Dorsolateral prefrontal cortex (tissue), 120 donors: ENCODE measurements at regions of chr18 and their contacts with region 1.

Region 1: DNA sequence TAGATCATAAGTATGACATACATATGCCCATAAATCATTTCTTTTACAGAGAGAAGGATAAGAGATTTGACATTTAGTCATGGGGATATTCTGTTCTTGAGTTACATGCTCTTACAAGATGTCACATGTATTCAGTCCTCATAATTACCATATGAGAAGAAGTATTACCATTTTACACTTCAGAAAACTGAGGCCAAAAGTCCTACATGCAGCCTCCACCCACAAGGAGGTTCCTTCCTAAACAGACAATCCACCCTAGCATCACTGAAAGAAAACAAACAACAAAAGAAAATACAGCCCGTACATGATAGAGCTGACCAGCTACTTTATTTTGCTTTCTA is 335.1 kb downstream of the SETBP1 start:
- DNase-seq: no peak
- H3K4me3 ChIP-seq: peak overlapping the region in 53 of 59 donors; percentile 18 to 65 (median 46)
- H3K27ac ChIP-seq: peak overlapping the region in 48 of 59 donors; percentile 11 to 89 (median 80)
- H3K27me3 ChIP-seq: no peaks in the 10 kb centered on the region
- CTCF ChIP-seq: no peak

Region 2: DNA sequence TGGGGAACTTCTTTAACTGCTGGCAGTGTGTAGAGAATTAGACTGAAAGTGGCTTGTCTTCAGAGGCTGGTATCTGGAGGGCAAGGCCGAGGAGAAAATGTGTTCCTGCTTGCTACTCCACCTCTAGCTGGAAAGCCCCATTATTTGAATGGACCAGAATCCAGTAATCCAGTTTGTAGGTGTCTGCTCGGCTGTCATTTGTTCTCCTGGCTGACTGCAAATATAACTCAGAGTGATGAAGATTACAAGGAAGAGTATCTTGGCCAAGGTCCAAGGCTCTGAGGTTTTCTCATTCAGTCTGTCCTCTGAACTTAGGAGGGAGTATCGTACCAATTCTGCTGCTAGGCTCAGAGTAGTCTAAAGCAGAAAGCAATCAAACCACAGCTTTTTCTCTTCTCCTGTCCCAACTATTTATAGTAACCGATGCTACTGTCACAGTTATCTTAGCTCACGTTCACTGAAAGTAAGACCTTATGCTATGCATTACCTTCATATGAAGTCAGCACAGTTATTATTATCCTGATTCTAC is 106.5 kb before region 1 on chr18:
- intact Hi-C with region 1: no loop called
- DNase-seq: no peak
- H3K4me3 ChIP-seq: no peak overlapping the region
- H3K27ac ChIP-seq: no peak overlapping the region
- H3K27me3 ChIP-seq: no peaks in the 10 kb centered on the region
- CTCF ChIP-seq: no peak

Region 3: DNA sequence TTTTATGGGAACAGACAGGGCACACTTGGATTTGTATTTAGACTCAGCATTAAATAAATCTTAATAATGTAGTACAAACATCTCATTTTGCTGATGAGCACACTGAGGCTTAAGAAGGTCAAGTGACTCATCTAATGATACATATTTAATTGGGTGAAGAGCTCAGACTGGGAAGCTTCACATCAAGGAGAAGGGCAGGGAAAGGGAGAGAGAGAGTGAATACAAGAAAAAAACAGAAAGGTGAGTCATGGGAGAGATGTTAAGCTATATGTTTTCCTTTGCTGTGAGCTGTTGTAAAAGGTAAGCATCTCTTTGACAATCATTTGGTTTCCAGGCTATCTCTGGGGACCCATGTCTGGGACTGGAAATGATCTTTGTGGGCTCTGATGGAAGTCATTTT is 57.3 kb before region 1 on chr18:
- intact Hi-C with region 1: loop called in 1 of 2 experiments (anchors 5 kb)
- DNase-seq: no peak
- H3K4me3 ChIP-seq: no peak overlapping the region
- H3K27ac ChIP-seq: peak overlapping the region in 9 of 59 donors; percentile 5 to 45 (median 14)
- H3K27me3 ChIP-seq: no peaks in the 10 kb centered on the region
- CTCF ChIP-seq: no peak

Region 4: DNA sequence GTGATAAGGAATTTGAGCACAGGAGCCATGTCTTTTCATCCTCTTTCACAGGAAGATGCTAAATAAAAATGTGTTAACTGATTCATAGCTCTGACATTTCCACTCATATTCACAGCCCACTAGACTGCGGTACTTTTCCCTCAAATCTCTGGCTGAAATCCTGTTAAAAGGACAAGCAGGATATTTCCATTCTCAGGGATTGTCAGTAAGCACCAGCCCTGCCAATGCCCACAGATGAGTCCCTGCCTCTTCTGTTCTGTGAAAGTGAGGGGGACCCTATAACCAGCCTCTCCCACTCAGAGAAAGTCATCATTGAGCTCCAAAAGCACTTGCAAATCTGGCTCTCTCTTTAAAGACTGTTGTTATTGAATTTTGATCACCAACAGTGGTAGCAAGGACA is 105.4 kb after region 1 on chr18:
- intact Hi-C with region 1: loop called in 1 of 2 experiments (anchors 1 kb)
- DNase-seq: peak in 3 of 10 donors; percentile 47 to 70 (median 66)
- H3K4me3 ChIP-seq: no peak overlapping the region
- H3K27ac ChIP-seq: peak overlapping the region in 33 of 59 donors; percentile 18 to 80 (median 61)
- H3K27me3 ChIP-seq: no peaks in the 10 kb centered on the region
- CTCF ChIP-seq: no peak